Tibial artery (tissue), 4 donors: ENCODE measurements at regions of chr1 and their contacts with region 1.

Region 1: GRCh38 chr1:20648946-20649345 is 12.2 kb downstream of the DDOST start:
- DNase-seq: no peak
- H3K4me3 ChIP-seq: no peak overlapping the region
- H3K27ac ChIP-seq: no peak overlapping the region
- H3K4me1 ChIP-seq: no peaks in the 10 kb centered on the region
- H3K27me3 ChIP-seq: no peaks in the 10 kb centered on the region
- CTCF ChIP-seq: no peak

Region 2: DNA sequence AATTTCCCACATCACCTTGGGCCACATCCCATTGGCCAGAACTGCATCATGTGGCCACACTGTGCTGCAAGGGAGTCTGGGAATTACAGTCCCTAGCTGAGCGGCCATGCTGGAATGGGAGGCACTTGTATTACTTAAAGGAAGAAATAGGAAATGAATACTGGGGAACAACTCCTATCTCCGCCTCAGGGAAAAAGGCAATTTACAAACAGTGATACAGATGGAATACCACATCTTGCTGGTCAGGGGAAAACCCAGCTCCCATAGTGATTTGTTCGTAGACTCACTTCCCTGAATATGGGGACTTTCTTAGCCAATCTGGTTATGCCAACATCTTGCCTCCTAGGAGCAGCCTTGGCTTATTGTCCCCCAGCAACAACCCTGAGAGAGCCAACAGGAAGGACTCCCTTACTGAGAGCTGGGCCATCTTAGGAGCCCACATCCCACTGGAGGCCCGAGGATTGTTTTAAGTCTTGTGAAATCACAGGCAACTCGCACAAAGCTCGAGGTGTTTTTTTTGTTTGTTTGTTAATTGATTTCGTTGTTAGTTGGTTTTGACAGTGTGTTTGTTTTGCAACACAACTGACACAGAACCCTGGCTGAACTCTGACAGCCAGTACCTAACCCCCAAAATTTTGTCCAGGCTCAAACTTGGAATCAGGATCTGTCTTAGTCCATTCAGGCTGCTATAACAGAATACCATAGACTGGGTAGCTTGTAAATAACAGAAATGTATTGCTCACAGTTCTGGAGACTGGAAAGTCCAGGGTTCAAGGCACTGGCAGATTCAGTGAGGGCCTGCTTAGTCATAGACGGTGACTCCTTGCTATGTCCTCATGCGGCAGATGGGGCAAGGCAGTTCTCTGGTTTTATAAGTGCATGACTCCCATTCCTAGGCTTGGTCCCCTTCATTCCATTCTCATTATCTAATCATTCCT is 45.1 kb before region 1 on chr1:
- intact Hi-C with region 1: loop called (anchors 1 kb)
- DNase-seq: no peak
- H3K4me3 ChIP-seq: no peak overlapping the region
- H3K27ac ChIP-seq: no peak overlapping the region
- H3K4me1 ChIP-seq: no peaks in the 10 kb centered on the region
- H3K27me3 ChIP-seq: peaks cover 0 to 15% of the 10 kb centered on the region in 2 donors
- CTCF ChIP-seq: no peak

Region 3: DNA sequence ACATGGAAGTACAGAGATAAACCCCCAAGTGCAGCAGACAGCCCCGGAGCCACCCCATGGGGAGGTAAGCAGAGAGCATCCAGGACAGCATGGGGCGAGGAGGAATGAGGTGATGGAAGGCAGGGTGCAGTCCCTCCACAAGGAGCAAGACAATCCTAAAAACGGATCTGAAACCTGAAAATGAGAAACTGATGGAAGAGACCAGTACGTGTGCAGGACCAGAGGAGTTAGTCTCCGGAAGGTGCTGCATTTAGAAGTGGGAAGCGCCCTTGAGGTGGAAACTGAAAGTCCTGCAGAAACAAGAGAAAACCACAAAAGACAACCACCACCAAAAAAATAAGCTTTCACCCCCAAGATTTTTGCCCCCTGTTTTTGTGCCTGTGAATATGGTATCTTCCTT is 29.7 kb after region 1 on chr1:
- intact Hi-C with region 1: no loop called
- DNase-seq: no peak
- H3K4me3 ChIP-seq: no peak overlapping the region
- H3K27ac ChIP-seq: no peak overlapping the region
- H3K4me1 ChIP-seq: no peaks in the 10 kb centered on the region
- H3K27me3 ChIP-seq: no peaks in the 10 kb centered on the region
- CTCF ChIP-seq: no peak

Region 4: GRCh38 chr1:20921285-20921684 is 272.3 kb after region 1 on chr1:
- intact Hi-C with region 1: no loop called
- DNase-seq: no peak
- H3K4me3 ChIP-seq: no peak overlapping the region
- H3K27ac ChIP-seq: no peak overlapping the region
- H3K4me1 ChIP-seq: no peaks in the 10 kb centered on the region
- H3K27me3 ChIP-seq: no peaks in the 10 kb centered on the region
- CTCF ChIP-seq: no peak